Calu3 (cell line): ENCODE measurements at regions of chr7 and their contacts with region 1.

Region 1: GRCh38 chr7:27098578-27099451 is 3.0 kb upstream of the HOXA1 start:
- DNase-seq: peak; percentile 58
- H3K4me3 Mint-ChIP-seq: peak overlapping the region; percentile 70
- H3K27ac Mint-ChIP-seq: peak overlapping the region; percentile 66
- H3K4me1 Mint-ChIP-seq: peaks cover 51% of the 10 kb centered on the region
- H3K27me3 Mint-ChIP-seq: peaks cover 17% of the 10 kb centered on the region
- CTCF ChIP-seq: no peak

Region 2: GRCh38 chr7:27112955-27113949 is 14.4 kb after region 1 on chr7:
- CTCF ChIA-PET with region 1: interaction called, 19 read pairs
- intact Hi-C with region 1: loop called (anchors 2 kb)
- DNase-seq: peak; percentile 67
- H3K4me3 Mint-ChIP-seq: peak overlapping the region; percentile 78
- H3K27ac Mint-ChIP-seq: peak overlapping the region; percentile 71
- H3K4me1 Mint-ChIP-seq: peaks cover 49% of the 10 kb centered on the region
- H3K27me3 Mint-ChIP-seq: no peaks in the 10 kb centered on the region
- CTCF ChIP-seq: no peak

Region 3: DNA sequence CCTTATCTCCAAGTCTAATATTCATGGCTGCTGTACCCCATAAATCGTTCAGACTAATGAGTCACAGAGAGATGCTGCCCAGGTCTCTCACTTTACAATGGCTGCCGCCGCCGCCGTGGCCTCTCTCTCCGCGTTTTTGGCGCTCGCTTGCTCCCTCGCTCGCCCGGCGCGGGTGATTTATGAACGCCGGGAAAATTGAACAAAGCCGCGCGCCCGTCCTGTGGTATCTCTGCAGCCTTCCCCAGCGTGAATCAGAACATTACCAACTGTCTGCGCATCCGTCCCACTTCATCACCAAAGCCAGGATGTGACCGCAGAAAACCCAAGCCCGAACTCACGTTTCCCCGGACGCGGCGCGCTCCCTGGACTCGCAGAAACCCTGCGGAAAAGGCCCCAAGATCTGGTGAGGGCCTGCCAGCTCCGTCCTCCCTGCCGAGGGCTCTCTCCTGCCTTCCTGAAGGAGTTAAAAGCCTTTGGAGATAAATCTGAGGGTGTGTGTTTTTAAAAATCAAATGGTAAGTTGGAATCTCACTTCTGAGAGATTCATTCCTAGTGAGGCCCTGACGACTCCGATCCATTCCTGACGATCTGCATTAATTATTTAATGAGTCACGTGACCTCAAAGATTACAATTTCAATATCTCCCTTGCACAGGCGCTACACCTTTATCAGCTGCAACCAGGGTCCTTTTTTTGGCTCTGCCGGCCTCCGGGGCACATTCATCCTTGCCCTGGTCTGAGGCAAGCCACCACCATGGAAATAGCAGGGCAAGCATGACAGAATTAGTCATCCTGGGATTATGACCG is 25.5 kb after region 1 on chr7:
- CTCF ChIA-PET with region 1: interaction called, 12 read pairs
- intact Hi-C with region 1: no loop called
- DNase-seq: no peak
- H3K4me3 Mint-ChIP-seq: peak overlapping the region; percentile 83
- H3K27ac Mint-ChIP-seq: no peak overlapping the region
- H3K4me1 Mint-ChIP-seq: peaks cover 63% of the 10 kb centered on the region
- H3K27me3 Mint-ChIP-seq: no peaks in the 10 kb centered on the region
- CTCF ChIP-seq: no peak